Activated T-helper 2 cell treated with anti-CD3 and anti-CD28 coated beads, Interferon-gamma antibody, Interleukin-2, Interleukin-4, amounts not matched to agents 10 μg/mL and 5 μg/mL and 100 μg/mL, durations not matched to agents 14 hours and 24 hours and 36 hours (primary cell): ENCODE measurements at regions of chr5 and their contacts with region 1.

Region 1: GRCh38 chr5:148620696-148621095 is 33.6 kb downstream of the HTR4 start:
- DNase-seq: peak; percentile 40
- H3K4me3 Mint-ChIP-seq: no peak overlapping the region
- H3K27ac Mint-ChIP-seq: no peak overlapping the region
- H3K4me1 Mint-ChIP-seq: peaks cover 35% of the 10 kb centered on the region
- H3K27me3 Mint-ChIP-seq: peaks cover 34% of the 10 kb centered on the region

Region 2: GRCh38 chr5:148383564-148384379 is 236.9 kb before region 1 on chr5 and contains the start of gene FBXO38:
- intact Hi-C with region 1: loop called (anchors 5 kb)
- DNase-seq: peak; percentile 95
- H3K4me3 Mint-ChIP-seq: peak within 1 kb of the TSS; percentile 96
- H3K27ac Mint-ChIP-seq: peak within 1 kb of the TSS; percentile 98
- H3K4me1 Mint-ChIP-seq: peaks cover 58% of the 10 kb centered on the region
- H3K27me3 Mint-ChIP-seq: no peaks in the 10 kb centered on the region
- total RNA-seq, gene FBXO38: 55.2 and 68.9 TPM in 2 replicates

Region 3: GRCh38 chr5:148491015-148491792 is 129.5 kb before region 1 on chr5:
- intact Hi-C with region 1: loop called (anchors 10 kb)
- DNase-seq: no peak
- H3K4me3 Mint-ChIP-seq: no peak overlapping the region
- H3K27ac Mint-ChIP-seq: no peak overlapping the region
- H3K4me1 Mint-ChIP-seq: no peaks in the 10 kb centered on the region
- H3K27me3 Mint-ChIP-seq: peaks cover 27% of the 10 kb centered on the region

Region 4: GRCh38 chr5:148708854-148709253 is 88.2 kb after region 1 on chr5:
- intact Hi-C with region 1: loop called (anchors 1 kb)
- DNase-seq: no peak
- H3K4me3 Mint-ChIP-seq: no peak overlapping the region
- H3K27ac Mint-ChIP-seq: peak overlapping the region; percentile 68
- H3K4me1 Mint-ChIP-seq: peaks cover 33% of the 10 kb centered on the region
- H3K27me3 Mint-ChIP-seq: peaks cover 5% of the 10 kb centered on the region

Region 5: DNA sequence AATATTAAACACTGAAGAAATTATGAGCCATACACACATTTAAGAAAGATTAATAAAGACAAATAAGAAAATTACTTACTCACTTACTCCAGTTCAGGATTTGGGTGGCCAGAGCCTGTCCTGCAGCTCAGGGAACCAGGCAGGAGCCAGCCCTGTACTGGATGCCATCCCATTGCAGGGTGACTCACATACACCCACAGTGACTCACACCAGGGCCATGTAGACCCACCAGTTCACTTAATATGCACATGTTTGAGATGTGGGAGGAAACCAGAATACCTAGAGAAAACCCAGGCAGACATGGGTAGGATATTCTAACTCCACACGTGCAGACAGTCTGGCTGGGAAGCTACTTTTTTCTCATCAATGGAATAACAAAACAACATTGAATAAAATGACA is 156.1 kb after region 1 on chr5:
- intact Hi-C with region 1: no loop called
- DNase-seq: no peak
- H3K4me3 Mint-ChIP-seq: no peak overlapping the region
- H3K27ac Mint-ChIP-seq: no peak overlapping the region
- H3K4me1 Mint-ChIP-seq: peaks cover 2% of the 10 kb centered on the region
- H3K27me3 Mint-ChIP-seq: peaks cover 33% of the 10 kb centered on the region